ENCODE measurements at regions of chr22 and their contacts with region 1.

Region 1: GRCh38 chr22:39170825-39171622 is 18.5 kb upstream of the CBX7 start:
- DNase-seq: peak in 1 of 2 experiments; percentile 98
- H3K4me3 ChIP-seq: no peak overlapping the region
- H3K27ac ChIP-seq: no peak overlapping the region; the same call in 1 of the 2 replicates
- H3K4me1 ChIP-seq: peaks cover 15 to 42% (median 35%) of the 10 kb centered on the region in 4 experiments
- H3K27me3 ChIP-seq: no peaks in the 10 kb centered on the region
- CTCF ChIP-seq: peak; percentile 88 to 95 (median 89)
- EP300 ChIP-seq: no peak
- POLR2A ChIP-seq: no peak
- RAD21 ChIP-seq: peak; percentile 97 to 99

Region 2: GRCh38 chr22:39148747-39149561 is 22.1 kb before region 1 on chr22:
- CTCF ChIA-PET with region 1: interaction called, 16 read pairs
- POLR2A ChIA-PET with region 1: interaction called, 5 read pairs
- DNase-seq: peak in 1 of 2 experiments; percentile 80
- H3K4me3 ChIP-seq: no peak overlapping the region
- H3K27ac ChIP-seq: peak overlapping the region; percentile 47
- H3K4me1 ChIP-seq: peaks cover 7 to 40% (median 30%) of the 10 kb centered on the region in 4 experiments
- H3K27me3 ChIP-seq: peaks cover 0 to 12% (median 11%) of the 10 kb centered on the region in 4 experiments; a peak in 6 of 7 replicates
- CTCF ChIP-seq: no peak
- EP300 ChIP-seq: no peak
- POLR2A ChIP-seq: 0 out of 3 replicates have a peak, but pooled peaks of 1 of the 2 experiments have one; percentile 39
- RAD21 ChIP-seq: no peak

Region 3: DNA sequence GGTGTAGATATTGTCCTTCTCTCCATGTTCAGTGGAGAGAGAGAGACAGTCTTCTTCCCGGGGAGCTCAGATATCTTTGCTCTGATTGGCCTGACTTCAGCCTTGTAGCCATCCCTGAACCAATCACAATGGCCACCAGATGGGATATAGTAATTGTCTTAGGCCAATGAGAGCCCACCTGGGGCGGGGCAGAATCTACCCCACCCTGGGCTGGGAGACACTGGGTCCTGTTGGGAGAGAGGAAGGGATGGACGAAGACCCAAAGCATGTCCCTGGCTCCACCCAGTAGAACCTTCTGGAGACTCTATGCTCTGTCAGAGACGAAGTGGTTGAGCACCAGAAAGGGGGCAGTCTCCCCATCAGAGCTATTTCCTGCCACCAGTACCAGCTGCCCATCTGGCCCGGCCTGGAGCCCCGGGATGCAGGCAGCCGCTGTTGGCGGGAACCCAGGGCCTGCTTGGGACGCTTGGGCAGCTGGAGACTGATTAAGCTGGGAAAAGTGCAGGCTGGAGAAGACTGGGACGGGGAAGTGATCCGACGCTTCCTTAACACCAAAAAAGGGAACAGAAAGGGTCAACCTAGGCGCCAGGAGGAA is 13.1 kb after region 1 on chr22:
- CTCF ChIA-PET with region 1: interaction called, 14 read pairs
- POLR2A ChIA-PET with region 1: interaction called, 9 read pairs
- DNase-seq: no peak
- H3K4me3 ChIP-seq: no peak overlapping the region
- H3K27ac ChIP-seq: no peak overlapping the region
- H3K4me1 ChIP-seq: peaks cover 0 to 18% (median 7%) of the 10 kb centered on the region in 4 experiments; a peak in 6 of 7 replicates
- H3K27me3 ChIP-seq: no peaks in the 10 kb centered on the region
- CTCF ChIP-seq: no peak
- EP300 ChIP-seq: no peak
- POLR2A ChIP-seq: no peak; a peak in 1 of 3 replicates
- RAD21 ChIP-seq: no peak

Region 4: GRCh38 chr22:39215426-39216120 is 44.5 kb after region 1 on chr22:
- CTCF ChIA-PET with region 1: interaction called, 35 read pairs
- POLR2A ChIA-PET with region 1: interaction called, 79 read pairs
- DNase-seq: peak in 1 of 2 experiments; percentile 67
- H3K4me3 ChIP-seq: no peak overlapping the region
- H3K27ac ChIP-seq: no peak overlapping the region; the same call in 1 of the 2 replicates
- H3K4me1 ChIP-seq: peaks cover 15 to 30% (median 20%) of the 10 kb centered on the region in 4 experiments
- H3K27me3 ChIP-seq: no peaks in the 10 kb centered on the region
- CTCF ChIP-seq: peak; percentile 48 to 79 (median 76); a peak in 3 of 4 replicates
- EP300 ChIP-seq: no peak
- POLR2A ChIP-seq: no peak
- RAD21 ChIP-seq: peak; percentile 42 to 59

Region 5: GRCh38 chr22:39230261-39231196 is 59.5 kb after region 1 on chr22:
- CTCF ChIA-PET with region 1: interaction called, 19 read pairs
- POLR2A ChIA-PET with region 1: interaction called, 16 read pairs
- DNase-seq: peak in 1 of 2 experiments; percentile 81
- H3K4me3 ChIP-seq: peak overlapping the region in 1 of 4 experiments; percentile 27; a peak in 3 of 8 replicates
- H3K27ac ChIP-seq: no peak overlapping the region
- H3K4me1 ChIP-seq: peaks cover 4 to 42% (median 31%) of the 10 kb centered on the region in 4 experiments
- H3K27me3 ChIP-seq: peaks cover 0 to 19% (median 6%) of the 10 kb centered on the region in 4 experiments; a peak in 5 of 7 replicates
- CTCF ChIP-seq: peak; percentile 0 to 40 (median 20); a peak in 2 of 4 replicates
- EP300 ChIP-seq: no peak
- POLR2A ChIP-seq: no peak
- RAD21 ChIP-seq: no peak; a peak in 1 of 4 replicates

Region 6: GRCh38 chr22:39253435-39254070 is 82.5 kb after region 1 on chr22:
- CTCF ChIA-PET with region 1: interaction called, 35 read pairs
- POLR2A ChIA-PET with region 1: interaction called, 3 read pairs
- DNase-seq: no peak
- H3K4me3 ChIP-seq: peak overlapping the region in 1 of 4 experiments; percentile 15; a peak in 1 of 8 replicates
- H3K27ac ChIP-seq: no peak overlapping the region
- H3K4me1 ChIP-seq: peaks cover 0 to 25% (median 19%) of the 10 kb centered on the region in 4 experiments; a peak in 6 of 7 replicates
- H3K27me3 ChIP-seq: peaks cover 0 to 14% (median 7%) of the 10 kb centered on the region in 4 experiments; a peak in 4 of 7 replicates
- CTCF ChIP-seq: no peak
- EP300 ChIP-seq: no peak
- POLR2A ChIP-seq: no peak
- RAD21 ChIP-seq: no peak

Region 7: DNA sequence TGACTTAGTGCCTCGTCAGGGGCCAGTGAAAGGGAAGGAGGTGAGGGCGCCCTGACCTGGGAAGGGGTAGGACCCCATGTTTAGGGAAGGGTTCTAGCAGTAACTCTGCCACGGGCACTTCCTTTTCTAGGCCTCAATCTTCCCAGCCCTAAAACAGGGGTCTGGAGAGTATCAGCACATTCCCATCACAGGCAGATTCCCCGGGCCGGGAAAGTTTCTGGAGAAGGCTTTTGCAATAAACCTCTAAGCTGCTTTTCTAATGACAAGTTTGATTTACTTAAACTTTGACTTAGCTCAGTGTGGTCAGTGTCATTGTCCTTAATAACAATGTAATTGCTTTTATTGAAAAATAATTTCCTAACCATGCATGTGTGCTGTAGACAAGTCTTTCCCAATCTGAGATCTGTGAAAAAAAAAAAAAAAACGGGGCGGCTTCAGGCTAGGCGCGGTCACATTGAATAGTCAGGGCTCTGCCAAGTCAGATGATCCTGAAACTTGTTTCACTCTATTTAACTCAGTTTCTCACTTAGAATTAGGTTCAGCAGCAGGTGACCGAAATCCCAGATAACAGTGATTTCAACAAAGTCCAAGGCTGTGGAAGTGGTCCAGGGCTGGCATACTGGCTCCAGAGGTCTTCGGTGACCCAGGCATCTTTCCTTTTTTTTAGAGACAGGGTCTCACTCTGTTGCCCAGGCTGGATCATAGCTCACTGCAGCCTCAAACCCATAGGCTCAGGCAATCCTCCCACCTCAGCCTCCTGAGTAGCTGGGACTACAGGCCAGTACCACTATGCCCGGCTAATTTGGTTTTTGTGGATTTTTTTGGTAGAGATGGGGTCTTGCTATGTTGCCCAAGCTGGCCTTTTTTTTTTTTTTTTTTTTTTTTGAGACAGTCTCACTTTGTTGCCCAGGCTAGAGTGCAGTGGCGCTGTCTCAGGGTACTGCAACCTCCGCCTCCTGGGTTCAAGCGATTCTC is 209.0 kb after region 1 on chr22:
- CTCF ChIA-PET with region 1: no interaction called
- POLR2A ChIA-PET with region 1: no interaction called
- DNase-seq: no peak
- H3K4me3 ChIP-seq: no peak overlapping the region
- H3K27ac ChIP-seq: no peak overlapping the region
- H3K4me1 ChIP-seq: 0 out of 7 replicates have a peak, but pooled peaks cover 0 to 5% (median 0%) of the 10 kb centered on the region in 4 experiments
- H3K27me3 ChIP-seq: no peaks in the 10 kb centered on the region
- CTCF ChIP-seq: no peak
- EP300 ChIP-seq: no peak
- POLR2A ChIP-seq: no peak
- RAD21 ChIP-seq: no peak

Measured in H1 (cell line).